ENCODE measurements at regions of chr5 and their contacts with region 1.

Region 1: DNA sequence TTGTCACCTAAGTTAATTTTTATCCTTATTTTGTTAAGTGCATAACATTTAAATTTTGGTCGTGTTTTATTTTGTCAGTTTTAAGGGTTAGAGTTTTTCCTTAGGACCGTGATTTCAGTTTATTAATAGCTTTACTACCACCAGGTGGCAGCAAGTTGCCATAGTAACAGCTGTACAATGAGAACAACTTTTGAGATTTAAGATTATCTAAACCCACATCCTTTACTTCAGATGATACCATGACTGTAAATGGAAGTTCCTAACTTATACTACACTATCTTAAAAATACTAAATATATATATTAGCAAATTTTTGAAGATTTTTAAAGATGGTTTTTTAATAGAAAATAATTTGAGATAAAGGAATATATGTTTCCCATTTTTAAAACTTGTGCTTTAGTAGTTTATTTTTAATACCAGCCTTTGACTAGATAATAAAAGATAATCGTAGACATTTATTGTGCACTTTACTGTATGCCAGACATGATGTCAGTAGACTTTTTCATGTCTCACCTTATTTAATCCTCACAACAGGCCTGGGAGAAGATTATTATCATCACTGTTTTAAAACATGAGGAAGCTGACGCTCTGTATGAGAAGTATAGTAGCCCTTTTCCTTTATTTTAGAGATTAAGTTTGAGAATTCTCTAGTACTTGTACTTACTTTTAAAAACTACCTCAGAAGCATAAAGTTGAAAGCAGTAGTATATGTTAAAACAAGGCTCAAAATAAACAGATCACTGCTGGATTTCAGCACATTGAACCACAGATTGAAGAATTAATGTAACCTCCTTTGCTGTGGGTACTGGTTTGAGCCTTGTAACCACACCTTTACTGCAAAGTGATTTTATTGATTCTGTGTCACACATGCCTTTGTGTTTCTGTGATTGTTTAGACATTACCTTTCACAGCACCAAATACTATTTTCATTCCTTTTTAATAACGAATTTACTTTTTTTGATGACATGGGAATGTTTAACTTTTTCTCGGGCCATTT is 27.5 kb downstream of the SREK1 start:
- DNase-seq: peak; percentile 20 to 89 (median 44)
- ATAC-seq: peak; percentile 68
- H3K4me3 ChIP-seq: no peak overlapping the region
- H3K4me3 Mint-ChIP-seq: peak overlapping the region; percentile 36
- H3K27ac ChIP-seq: peak overlapping the region in 1 of 2 donors; percentile 6
- H3K27ac Mint-ChIP-seq: peak overlapping the region; percentile 85
- H3K4me1 ChIP-seq: no peaks in the 10 kb centered on the region
- H3K4me1 Mint-ChIP-seq: peaks cover 41% of the 10 kb centered on the region
- H3K27me3 ChIP-seq: no peaks in the 10 kb centered on the region
- H3K27me3 Mint-ChIP-seq: no peaks in the 10 kb centered on the region
- CTCF ChIP-seq: peak; percentile 69

Region 2: GRCh38 chr5:66010476-66010875 is 161.2 kb before region 1 on chr5:
- CTCF ChIA-PET with region 1: no interaction called
- POLR2A ChIA-PET with region 1: no interaction called
- intact Hi-C with region 1: no loop called
- DNase-seq: peak in 3 of 14 experiments; percentile 18 to 49 (median 28)
- ATAC-seq: peak; percentile 93
- H3K4me3 ChIP-seq: no peak overlapping the region
- H3K4me3 Mint-ChIP-seq: peak overlapping the region; percentile 7
- H3K27ac ChIP-seq: no peak overlapping the region
- H3K27ac Mint-ChIP-seq: peak overlapping the region; percentile 90
- H3K4me1 ChIP-seq: peaks cover 2% of the 10 kb centered on the region
- H3K4me1 Mint-ChIP-seq: peaks cover 55% of the 10 kb centered on the region
- H3K27me3 ChIP-seq: no peaks in the 10 kb centered on the region
- H3K27me3 Mint-ChIP-seq: no peaks in the 10 kb centered on the region
- CTCF ChIP-seq: no peak

Region 3: GRCh38 chr5:66149950-66150349 is 21.7 kb before region 1 on chr5:
- CTCF ChIA-PET with region 1: interaction called, 3 read pairs
- POLR2A ChIA-PET with region 1: no interaction called
- intact Hi-C with region 1: loop called (anchors 1 to 2 kb)
- DNase-seq: no peak
- ATAC-seq: no peak
- H3K4me3 ChIP-seq: no peak overlapping the region
- H3K4me3 Mint-ChIP-seq: no peak overlapping the region
- H3K27ac ChIP-seq: no peak overlapping the region
- H3K27ac Mint-ChIP-seq: no peak overlapping the region
- H3K4me1 ChIP-seq: peaks cover 7% of the 10 kb centered on the region
- H3K4me1 Mint-ChIP-seq: peaks cover 65% of the 10 kb centered on the region
- H3K27me3 ChIP-seq: no peaks in the 10 kb centered on the region
- H3K27me3 Mint-ChIP-seq: no peaks in the 10 kb centered on the region
- CTCF ChIP-seq: no peak

Measured in CD4-positive, alpha-beta T cell (primary cell).